Ascending aorta (tissue), 2 donors: ENCODE measurements at regions of chrX and their contacts with region 1.

Region 1: GRCh38 chrX:40266490-40267333 is 169.0 kb upstream of the BCOR start:
- DNase-seq: peak in 1 of 2 donors; percentile 79
- H3K4me3 ChIP-seq: peak overlapping the region; percentile 52 to 64
- H3K27ac ChIP-seq: peak overlapping the region; percentile 69 to 89
- H3K4me1 ChIP-seq: peaks cover 0 to 14% of the 10 kb centered on the region in 2 donors
- H3K27me3 ChIP-seq: no peaks in the 10 kb centered on the region
- CTCF ChIP-seq: peak; percentile 65 to 66 (median 66)

Region 2: DNA sequence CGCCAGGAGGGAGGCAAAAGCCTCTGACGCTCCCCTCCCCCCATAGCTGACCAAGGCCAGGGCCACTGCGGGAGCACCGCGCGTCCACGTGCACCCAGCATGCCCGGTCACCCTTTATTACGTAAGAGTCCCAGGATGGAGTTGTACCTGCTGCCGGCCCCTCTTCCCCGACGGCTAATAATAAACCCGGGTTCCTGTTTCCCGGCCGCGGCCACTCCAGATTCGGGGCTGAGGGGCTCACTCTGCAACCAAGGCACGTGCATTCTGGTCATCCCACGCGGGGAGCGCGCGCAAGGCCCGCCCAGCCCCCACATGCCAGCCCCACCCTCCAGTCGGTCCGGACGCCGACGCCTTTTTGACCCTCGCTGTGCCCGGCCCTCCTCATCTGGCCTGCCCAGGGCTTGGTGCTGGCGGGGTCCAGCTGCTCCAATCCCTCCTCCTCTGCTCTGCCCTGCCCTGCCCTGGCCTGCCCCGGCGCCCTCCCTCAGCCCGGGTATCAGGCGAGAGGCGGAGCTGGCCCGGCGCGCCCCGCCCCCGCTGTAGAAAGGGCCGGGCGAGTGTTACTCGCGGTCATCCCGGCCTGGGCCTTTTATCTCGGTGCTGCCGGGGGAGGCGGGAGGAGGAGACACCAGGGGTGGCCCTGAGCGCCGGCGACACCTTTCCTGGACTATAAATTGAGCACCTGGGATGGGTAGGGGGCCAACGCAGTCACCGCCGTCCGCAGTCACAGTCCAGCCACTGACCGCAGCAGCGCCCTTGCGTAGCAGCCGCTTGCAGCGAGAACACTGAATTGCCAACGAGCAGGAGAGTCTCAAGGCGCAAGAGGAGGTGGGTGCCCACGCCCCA is 1462.9 kb before region 1 on chrX:
- intact Hi-C with region 1: loop called (anchors 10 kb)
- DNase-seq: peak; percentile 49 to 90
- H3K4me3 ChIP-seq: peak overlapping the region; percentile 66 to 78
- H3K27ac ChIP-seq: peak overlapping the region; percentile 80 to 91
- H3K4me1 ChIP-seq: peaks cover 0 to 5% of the 10 kb centered on the region in 2 donors
- H3K27me3 ChIP-seq: no peaks in the 10 kb centered on the region
- CTCF ChIP-seq: no peak

Region 3: GRCh38 chrX:39652336-39653131 is 614.2 kb before region 1 on chrX:
- intact Hi-C with region 1: loop called (anchors 2 kb)
- DNase-seq: no peak
- H3K4me3 ChIP-seq: no peak overlapping the region
- H3K27ac ChIP-seq: no peak overlapping the region
- H3K4me1 ChIP-seq: peaks cover 0 to 5% of the 10 kb centered on the region in 2 donors
- H3K27me3 ChIP-seq: no peaks in the 10 kb centered on the region
- CTCF ChIP-seq: peak in 1 of 3 experiments; percentile 46

Region 4: DNA sequence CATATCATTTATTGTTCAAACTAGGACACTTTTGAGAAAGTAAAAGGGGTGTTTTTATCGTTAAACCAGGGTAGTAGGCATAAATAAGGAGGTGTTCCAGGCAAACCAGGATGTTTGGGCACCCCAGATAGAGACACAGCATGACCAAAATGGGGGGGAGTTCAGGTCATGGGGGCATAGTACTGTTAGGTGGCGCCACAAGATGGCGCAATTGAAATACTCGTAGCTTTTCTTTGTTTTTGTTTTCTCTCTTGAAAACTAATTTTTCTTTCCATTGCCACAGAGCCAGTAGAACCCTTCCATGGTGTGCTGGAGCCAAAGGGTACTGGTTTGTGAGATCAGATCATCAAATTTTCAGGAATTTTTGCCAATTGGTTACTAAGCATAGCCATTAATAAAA is 452.3 kb before region 1 on chrX:
- intact Hi-C with region 1: loop called (anchors 5 kb)
- DNase-seq: no peak
- H3K4me3 ChIP-seq: no peak overlapping the region
- H3K27ac ChIP-seq: peak overlapping the region; percentile 46 to 63
- H3K4me1 ChIP-seq: peaks cover 0 to 22% of the 10 kb centered on the region in 2 donors
- H3K27me3 ChIP-seq: no peaks in the 10 kb centered on the region
- CTCF ChIP-seq: peak; percentile 19 to 41 (median 28)

Region 5: GRCh38 chrX:40013266-40014195 is 253.2 kb before region 1 on chrX:
- intact Hi-C with region 1: loop called (anchors 2 kb)
- DNase-seq: peak in 1 of 2 donors; percentile 79
- H3K4me3 ChIP-seq: peak overlapping the region; percentile 55 to 67
- H3K27ac ChIP-seq: peak overlapping the region; percentile 92 to 97
- H3K4me1 ChIP-seq: peaks cover 0 to 9% of the 10 kb centered on the region in 2 donors
- H3K27me3 ChIP-seq: peaks cover 10% of the 10 kb centered on the region
- CTCF ChIP-seq: no peak

Region 6: GRCh38 chrX:40153335-40154249 is 113.1 kb before region 1 on chrX:
- intact Hi-C with region 1: loop called (anchors 5 kb)
- DNase-seq: no peak
- H3K4me3 ChIP-seq: peak overlapping the region; percentile 56 to 62
- H3K27ac ChIP-seq: peak overlapping the region; percentile 63 to 67
- H3K4me1 ChIP-seq: peaks cover 9 to 10% of the 10 kb centered on the region in 2 donors
- H3K27me3 ChIP-seq: peaks cover 8% of the 10 kb centered on the region
- CTCF ChIP-seq: no peak

Region 7: DNA sequence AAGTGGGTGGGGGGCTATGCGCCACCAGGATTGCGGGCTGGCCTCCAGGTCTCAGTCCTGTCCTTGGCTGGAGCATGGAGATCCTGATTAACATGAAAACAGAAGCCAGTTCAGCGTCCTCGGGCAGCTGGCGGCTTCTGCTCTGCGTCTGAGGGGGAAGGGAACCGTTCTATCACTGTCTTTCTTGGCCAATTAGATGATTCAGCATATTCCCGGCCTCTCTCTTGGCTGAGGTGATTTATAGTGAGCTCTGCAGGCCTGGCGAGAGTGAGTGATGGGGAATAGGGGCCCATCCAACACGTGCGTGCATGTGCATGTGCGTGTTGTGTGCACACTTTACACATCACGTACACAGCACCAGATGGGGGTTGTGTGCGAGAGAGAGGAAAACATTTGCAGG is 168.2 kb after region 1 on chrX:
- intact Hi-C with region 1: no loop called
- DNase-seq: no peak
- H3K4me3 ChIP-seq: peak overlapping the region in 1 of 2 donors; percentile 22
- H3K27ac ChIP-seq: no peak overlapping the region
- H3K4me1 ChIP-seq: no peaks in the 10 kb centered on the region
- H3K27me3 ChIP-seq: no peaks in the 10 kb centered on the region
- CTCF ChIP-seq: no peak